Activated CD8-positive, alpha-beta T cell treated with anti-CD3 and anti-CD28 coated beads for 36 hours (primary cell): ENCODE measurements at regions of chr11 and their contacts with region 1.

Region 1: DNA sequence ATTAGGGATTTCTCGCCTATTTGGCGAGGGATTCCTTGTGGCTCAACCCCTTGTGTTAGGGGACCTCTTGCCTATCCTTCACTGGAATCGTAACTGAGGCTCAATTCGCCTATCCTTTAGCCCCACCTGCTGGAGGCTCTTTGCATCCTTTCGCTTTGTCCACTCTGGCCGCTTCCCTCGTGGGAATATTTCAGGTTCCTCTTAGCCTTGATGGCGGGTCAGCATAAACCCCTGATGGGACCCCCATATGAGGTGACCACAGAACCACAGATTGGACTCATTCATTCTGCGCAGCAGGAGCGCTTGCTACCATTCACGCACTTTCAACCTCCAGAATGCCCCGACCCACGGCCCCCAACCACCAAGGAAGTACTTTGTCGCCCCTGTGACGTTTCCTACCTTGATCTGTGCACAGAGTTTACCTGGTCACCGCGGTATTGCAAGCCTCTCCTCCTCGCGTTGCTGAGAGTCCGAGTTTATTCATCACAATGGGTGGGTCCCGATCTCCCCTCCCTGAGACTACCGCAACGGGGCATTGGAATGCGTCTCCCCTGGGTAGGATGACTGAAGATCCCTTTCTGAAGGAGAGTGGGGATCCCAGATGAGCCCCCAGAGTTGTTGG is at the start of gene OR52N2:
- DNase-seq: peak; percentile 79
- ATAC-seq: peak; percentile 91
- H3K4me3 Mint-ChIP-seq: peak within 1 kb of the TSS; percentile 85
- H3K27ac Mint-ChIP-seq: peak within 1 kb of the TSS; percentile 57
- H3K4me1 Mint-ChIP-seq: peaks cover 6% of the 10 kb centered on the region
- H3K27me3 Mint-ChIP-seq: peaks cover 15% of the 10 kb centered on the region
- CTCF ChIP-seq: peak; percentile 74
- total RNA-seq, gene OR52N2: not detected

Region 2: GRCh38 chr11:5123802-5124521 is 684.6 kb before region 1 on chr11:
- CTCF ChIA-PET with region 1: interaction called, 4 read pairs
- POLR2A ChIA-PET with region 1: no interaction called
- intact Hi-C with region 1: loop called (anchors 10 kb)
- DNase-seq: peak; percentile 69
- ATAC-seq: peak; percentile 62
- H3K4me3 Mint-ChIP-seq: no peak overlapping the region
- H3K27ac Mint-ChIP-seq: no peak overlapping the region
- H3K4me1 Mint-ChIP-seq: no peaks in the 10 kb centered on the region
- H3K27me3 Mint-ChIP-seq: peaks cover 14% of the 10 kb centered on the region
- CTCF ChIP-seq: peak; percentile 84

Region 3: GRCh38 chr11:5476184-5476819 is 332.3 kb before region 1 on chr11:
- CTCF ChIA-PET with region 1: interaction called, 13 read pairs
- POLR2A ChIA-PET with region 1: interaction called, 3 read pairs
- intact Hi-C with region 1: no loop called
- DNase-seq: peak; percentile 55
- ATAC-seq: peak; percentile 71
- H3K4me3 Mint-ChIP-seq: no peak overlapping the region
- H3K27ac Mint-ChIP-seq: no peak overlapping the region
- H3K4me1 Mint-ChIP-seq: no peaks in the 10 kb centered on the region
- H3K27me3 Mint-ChIP-seq: peaks cover 5% of the 10 kb centered on the region
- CTCF ChIP-seq: peak; percentile 81

Region 4: GRCh38 chr11:5600374-5600851 is 208.2 kb before region 1 on chr11:
- CTCF ChIA-PET with region 1: interaction called, 5 read pairs
- POLR2A ChIA-PET with region 1: no interaction called
- intact Hi-C with region 1: loop called (anchors 1 kb)
- DNase-seq: peak; percentile 77
- ATAC-seq: peak; percentile 95
- H3K4me3 Mint-ChIP-seq: no peak overlapping the region
- H3K27ac Mint-ChIP-seq: no peak overlapping the region
- H3K4me1 Mint-ChIP-seq: peaks cover 3% of the 10 kb centered on the region
- H3K27me3 Mint-ChIP-seq: peaks cover 2% of the 10 kb centered on the region
- CTCF ChIP-seq: peak; percentile 82

Region 5: DNA sequence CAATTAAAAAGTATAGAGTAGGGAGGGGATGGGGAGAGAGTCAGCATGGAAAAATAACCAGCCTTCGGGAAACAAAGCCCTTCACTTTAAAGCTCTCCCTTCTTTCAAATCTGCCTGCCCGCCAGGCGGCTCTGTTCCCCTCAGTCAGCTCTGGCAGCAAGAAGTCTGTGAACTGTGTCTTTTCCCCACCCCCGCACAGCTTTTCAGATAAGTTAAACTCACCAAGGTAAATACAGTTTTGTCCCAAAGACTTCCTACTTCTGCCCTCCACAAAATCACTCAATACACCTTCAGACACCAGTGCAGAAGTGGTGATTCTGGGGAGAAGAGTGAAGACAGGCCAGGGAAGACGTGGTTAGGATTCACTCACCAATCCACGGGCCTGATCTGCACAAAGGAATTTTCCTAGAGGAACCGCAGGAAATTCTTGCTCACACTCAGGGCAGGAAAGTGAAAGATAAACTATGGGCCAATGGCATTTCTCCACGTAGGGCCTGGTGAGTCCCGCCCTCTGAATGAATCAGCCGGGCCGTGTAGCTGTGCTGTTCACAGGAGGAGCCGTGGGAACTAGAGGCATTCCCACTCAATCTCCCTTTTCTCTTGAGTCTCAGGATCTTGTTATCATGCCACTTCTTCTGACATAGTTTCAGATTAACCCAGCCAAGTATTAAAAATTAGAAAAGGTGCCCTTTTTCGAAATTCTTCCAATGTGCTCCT is 123.8 kb before region 1 on chr11 and contains the start of gene TRIM5:
- CTCF ChIA-PET with region 1: interaction called, 10 read pairs
- POLR2A ChIA-PET with region 1: no interaction called
- intact Hi-C with region 1: loop called (anchors 5 kb)
- DNase-seq: peak; percentile 94
- ATAC-seq: peak; percentile 84
- H3K4me3 Mint-ChIP-seq: peak within 1 kb of the TSS; percentile 95
- H3K27ac Mint-ChIP-seq: peak within 1 kb of the TSS; percentile 98
- H3K4me1 Mint-ChIP-seq: peaks cover 49% of the 10 kb centered on the region
- H3K27me3 Mint-ChIP-seq: no peaks in the 10 kb centered on the region
- CTCF ChIP-seq: peak; percentile 75
- total RNA-seq, gene TRIM5: 21.5 TPM

Region 6: DNA sequence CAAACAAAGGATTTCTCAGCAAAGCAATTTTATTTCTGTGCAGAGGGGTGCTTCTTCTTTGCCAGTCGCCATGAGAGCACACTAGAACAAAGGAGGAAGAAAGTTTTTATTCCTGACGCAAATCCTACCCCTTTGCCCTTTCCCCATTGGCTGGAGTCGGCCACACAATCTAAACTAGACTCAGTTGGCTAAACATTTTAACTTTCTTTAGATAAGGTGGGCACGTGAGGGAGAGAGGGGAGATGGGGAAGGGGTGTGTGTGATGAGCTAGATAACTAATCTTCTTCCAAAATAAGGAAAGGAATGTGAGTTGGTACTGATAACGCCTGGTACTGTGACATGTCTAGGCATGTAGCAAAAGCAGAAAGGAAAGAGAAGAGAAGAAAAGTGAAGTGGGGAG is 118.4 kb before region 1 on chr11:
- CTCF ChIA-PET with region 1: interaction called, 10 read pairs
- POLR2A ChIA-PET with region 1: no interaction called
- intact Hi-C with region 1: loop called (anchors 5 kb)
- DNase-seq: no peak
- ATAC-seq: no peak
- H3K4me3 Mint-ChIP-seq: peak overlapping the region; percentile 88
- H3K27ac Mint-ChIP-seq: peak overlapping the region; percentile 95
- H3K4me1 Mint-ChIP-seq: peaks cover 49% of the 10 kb centered on the region
- H3K27me3 Mint-ChIP-seq: no peaks in the 10 kb centered on the region
- CTCF ChIP-seq: no peak